Transverse colon (tissue), 4 donors: ENCODE measurements at regions of chr10 and their contacts with region 1.

Region 1: DNA sequence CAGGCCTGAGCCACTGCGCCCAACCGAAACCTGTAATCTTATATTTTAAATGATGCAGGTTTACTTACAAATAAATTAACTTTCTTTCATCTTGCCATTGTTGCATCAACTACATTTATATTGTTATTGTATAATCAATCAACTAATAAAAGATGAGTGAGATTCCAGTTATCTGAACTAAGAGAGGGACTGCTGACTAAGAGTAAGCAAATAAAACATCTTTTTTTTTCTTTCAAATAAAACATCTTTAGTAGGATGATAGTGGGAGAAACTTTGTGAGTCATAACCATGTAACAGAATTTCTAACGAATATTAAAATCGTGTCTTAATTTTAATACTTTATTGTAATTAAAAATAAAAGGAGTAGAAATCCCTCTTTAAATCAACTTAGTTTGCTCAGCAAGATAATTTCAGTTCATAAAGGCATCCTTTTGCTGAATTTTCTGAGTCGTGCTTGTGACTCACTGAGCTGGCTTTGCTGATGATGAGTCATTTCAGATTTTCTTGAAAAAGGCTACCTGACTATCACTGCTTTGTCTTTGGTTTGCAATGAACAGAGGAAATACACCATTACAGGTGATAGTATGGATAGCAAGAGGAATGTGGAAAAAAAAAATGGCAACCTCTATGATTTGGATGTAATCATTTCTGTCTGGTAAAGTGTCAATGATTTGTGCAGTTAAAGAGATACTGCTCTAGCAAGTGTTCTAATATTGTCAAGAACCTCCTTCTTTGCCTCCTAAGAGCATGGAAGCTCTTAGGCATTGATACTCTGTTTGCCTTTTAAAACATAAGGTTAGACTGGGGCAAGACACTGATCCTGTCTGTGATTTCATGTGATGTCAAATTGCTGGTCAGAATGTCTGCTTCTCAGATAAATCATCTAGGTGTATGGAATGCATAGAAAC is 119.5 kb downstream of the GPR158 start:
- DNase-seq: no peak
- H3K4me3 ChIP-seq: no peak overlapping the region
- H3K27ac ChIP-seq: no peak overlapping the region
- H3K4me1 ChIP-seq: no peaks in the 10 kb centered on the region
- H3K27me3 ChIP-seq: no peaks in the 10 kb centered on the region
- CTCF ChIP-seq: no peak
- EP300 ChIP-seq: no peak
- POLR2A ChIP-seq: no peak

Region 2: DNA sequence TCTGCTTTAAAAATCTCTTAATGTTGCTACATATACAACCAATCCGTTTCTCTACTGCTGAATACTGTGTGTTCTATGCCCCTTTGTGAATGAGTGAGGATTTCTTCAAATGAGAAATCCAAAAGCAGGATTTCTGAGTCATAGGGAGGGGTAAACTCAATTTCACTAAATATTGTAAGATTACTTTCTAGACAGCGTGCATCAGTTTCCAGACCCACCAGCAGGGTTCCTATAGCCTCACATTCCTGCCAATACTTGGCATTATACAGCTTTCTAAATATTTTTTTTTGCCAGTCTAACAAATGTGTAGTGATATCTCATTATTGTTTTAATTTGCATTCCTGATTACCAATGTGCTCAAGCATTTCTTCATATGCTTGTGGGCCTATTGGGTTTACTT is 84.0 kb before region 1 on chr10:
- in situ Hi-C with region 1: no loop called
- intact Hi-C with region 1: no loop called
- DNase-seq: no peak
- H3K4me3 ChIP-seq: no peak overlapping the region
- H3K27ac ChIP-seq: no peak overlapping the region
- H3K4me1 ChIP-seq: peaks cover 0 to 5% (median 0%) of the 10 kb centered on the region in 4 donors
- H3K27me3 ChIP-seq: no peaks in the 10 kb centered on the region
- CTCF ChIP-seq: no peak
- EP300 ChIP-seq: no peak
- POLR2A ChIP-seq: no peak

Region 3: GRCh38 chr10:25308278-25308677 is 14.0 kb after region 1 on chr10:
- in situ Hi-C with region 1: no loop called
- intact Hi-C with region 1: loop called (anchors 1 kb)
- DNase-seq: no peak
- H3K4me3 ChIP-seq: no peak overlapping the region
- H3K27ac ChIP-seq: no peak overlapping the region
- H3K4me1 ChIP-seq: no peaks in the 10 kb centered on the region
- H3K27me3 ChIP-seq: no peaks in the 10 kb centered on the region
- CTCF ChIP-seq: no peak
- EP300 ChIP-seq: no peak
- POLR2A ChIP-seq: no peak